Caco-2 (cell line): ENCODE measurements at regions of chr5 and their contacts with region 1.

Region 1: DNA sequence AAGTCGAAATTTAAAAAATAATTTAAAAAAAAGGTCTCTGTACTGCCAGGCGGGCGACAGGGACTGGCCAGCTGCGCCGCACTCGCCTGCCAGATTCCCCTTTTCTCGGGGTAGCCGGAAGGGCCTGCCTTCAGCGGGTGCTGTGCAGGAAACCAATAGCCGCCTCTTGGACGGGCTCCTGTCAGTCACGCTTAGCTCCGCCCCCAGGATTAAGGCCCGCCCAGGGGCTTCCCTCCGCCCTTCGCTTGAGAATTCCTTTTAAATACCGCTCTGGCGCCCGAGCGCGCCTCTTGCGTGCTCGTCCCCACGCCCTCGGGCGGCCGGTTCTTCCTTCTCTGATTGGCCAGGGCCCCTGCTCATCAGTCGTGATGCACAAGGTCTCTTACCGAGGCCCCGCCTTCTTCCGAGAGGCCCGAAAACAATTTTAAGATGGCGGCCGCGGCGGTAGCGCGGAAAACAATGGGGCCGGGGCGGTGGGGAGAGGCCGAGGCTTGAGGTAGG is at the start of gene MAML1:
- DNase-seq: peak; percentile 100
- H3K4me3 ChIP-seq: peak within 1 kb of the TSS; percentile 78
- H3K4me3 Mint-ChIP-seq: peak within 1 kb of the TSS; percentile 70
- H3K27ac Mint-ChIP-seq: peak within 1 kb of the TSS; percentile 85
- H3K4me1 ChIP-seq: peaks cover 13% of the 10 kb centered on the region
- H3K4me1 Mint-ChIP-seq: peaks cover 8% of the 10 kb centered on the region
- H3K27me3 ChIP-seq: no peaks in the 10 kb centered on the region
- H3K27me3 Mint-ChIP-seq: no peaks in the 10 kb centered on the region
- CTCF ChIP-seq: no peak
- total RNA-seq, gene MAML1: 39.3 and 41.3 TPM in 2 replicates

Region 2: DNA sequence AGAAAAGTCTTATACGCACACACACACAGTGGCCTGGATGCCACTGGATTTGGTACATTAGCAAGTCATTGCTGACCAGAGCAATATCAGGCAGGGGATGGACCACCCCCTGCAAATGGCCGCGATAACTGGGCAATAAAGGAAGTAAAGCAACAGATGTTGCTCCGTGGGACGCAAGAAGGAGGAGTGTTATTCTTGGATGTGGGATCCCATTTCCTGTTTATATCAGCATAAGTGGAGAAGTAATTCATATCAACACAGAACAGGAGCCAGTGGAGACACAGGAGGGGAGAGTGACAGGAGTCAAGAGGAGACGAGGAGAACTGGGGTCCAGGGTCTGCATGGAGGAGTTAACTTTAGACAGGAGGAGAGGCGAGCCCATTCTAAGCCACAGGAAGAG is 163.7 kb before region 1 on chr5:
- CTCF ChIA-PET with region 1: no interaction called
- POLR2A ChIA-PET with region 1: no interaction called
- intact Hi-C with region 1: no loop called
- DNase-seq: no peak
- H3K4me3 ChIP-seq: no peak overlapping the region
- H3K4me3 Mint-ChIP-seq: no peak overlapping the region
- H3K27ac Mint-ChIP-seq: no peak overlapping the region
- H3K4me1 ChIP-seq: no peaks in the 10 kb centered on the region
- H3K4me1 Mint-ChIP-seq: no peaks in the 10 kb centered on the region
- H3K27me3 ChIP-seq: no peaks in the 10 kb centered on the region
- H3K27me3 Mint-ChIP-seq: no peaks in the 10 kb centered on the region
- CTCF ChIP-seq: no peak

Region 3: GRCh38 chr5:179678223-179679013 is 54.0 kb before region 1 on chr5:
- CTCF ChIA-PET with region 1: interaction called, 3 read pairs
- POLR2A ChIA-PET with region 1: interaction called, 7 read pairs
- intact Hi-C with region 1: loop called (anchors 2 kb)
- DNase-seq: peak; percentile 95 to 96
- H3K4me3 ChIP-seq: peak overlapping the region; percentile 72
- H3K4me3 Mint-ChIP-seq: peak overlapping the region; percentile 98
- H3K27ac Mint-ChIP-seq: peak overlapping the region; percentile 97
- H3K4me1 ChIP-seq: peaks cover 11% of the 10 kb centered on the region
- H3K4me1 Mint-ChIP-seq: peaks cover 21% of the 10 kb centered on the region
- H3K27me3 ChIP-seq: no peaks in the 10 kb centered on the region
- H3K27me3 Mint-ChIP-seq: no peaks in the 10 kb centered on the region
- CTCF ChIP-seq: no peak

Region 4: GRCh38 chr5:179697993-179698934 is 34.2 kb before region 1 on chr5:
- CTCF ChIA-PET with region 1: no interaction called
- POLR2A ChIA-PET with region 1: no interaction called
- intact Hi-C with region 1: loop called (anchors 1 kb)
- DNase-seq: peak; percentile 99 to 100
- H3K4me3 ChIP-seq: peak overlapping the region; percentile 95
- H3K4me3 Mint-ChIP-seq: peak overlapping the region; percentile 99
- H3K27ac Mint-ChIP-seq: peak overlapping the region; percentile 93
- H3K4me1 ChIP-seq: peaks cover 8% of the 10 kb centered on the region
- H3K4me1 Mint-ChIP-seq: peaks cover 8% of the 10 kb centered on the region
- H3K27me3 ChIP-seq: no peaks in the 10 kb centered on the region
- H3K27me3 Mint-ChIP-seq: no peaks in the 10 kb centered on the region
- CTCF ChIP-seq: no peak

Region 5: GRCh38 chr5:179755022-179755421 is 22.6 kb after region 1 on chr5:
- CTCF ChIA-PET with region 1: interaction called, 4 read pairs
- POLR2A ChIA-PET with region 1: interaction called, 9 read pairs
- intact Hi-C with region 1: loop called (anchors 1 kb)
- DNase-seq: peak in 1 of 2 experiments; percentile 32
- H3K4me3 ChIP-seq: no peak overlapping the region
- H3K4me3 Mint-ChIP-seq: peak overlapping the region; percentile 9
- H3K27ac Mint-ChIP-seq: peak overlapping the region; percentile 8
- H3K4me1 ChIP-seq: peaks cover 18% of the 10 kb centered on the region
- H3K4me1 Mint-ChIP-seq: peaks cover 36% of the 10 kb centered on the region
- H3K27me3 ChIP-seq: no peaks in the 10 kb centered on the region
- H3K27me3 Mint-ChIP-seq: no peaks in the 10 kb centered on the region
- CTCF ChIP-seq: no peak

Region 6: GRCh38 chr5:179763215-179763945 is 30.9 kb after region 1 on chr5:
- CTCF ChIA-PET with region 1: interaction called, 4 read pairs
- POLR2A ChIA-PET with region 1: interaction called, 6 read pairs
- intact Hi-C with region 1: loop called (anchors 2 kb)
- DNase-seq: peak; percentile 82
- H3K4me3 ChIP-seq: no peak overlapping the region
- H3K4me3 Mint-ChIP-seq: no peak overlapping the region
- H3K27ac Mint-ChIP-seq: peak overlapping the region; percentile 81
- H3K4me1 ChIP-seq: peaks cover 12% of the 10 kb centered on the region
- H3K4me1 Mint-ChIP-seq: peaks cover 31% of the 10 kb centered on the region
- H3K27me3 ChIP-seq: no peaks in the 10 kb centered on the region
- H3K27me3 Mint-ChIP-seq: no peaks in the 10 kb centered on the region
- CTCF ChIP-seq: peak; percentile 84 to 96

Region 7: GRCh38 chr5:179795863-179796833 is 63.7 kb after region 1 on chr5:
- CTCF ChIA-PET with region 1: interaction called, 9 read pairs
- POLR2A ChIA-PET with region 1: interaction called, 5 read pairs
- intact Hi-C with region 1: loop called (anchors 1 kb)
- DNase-seq: peak; percentile 91 to 95
- H3K4me3 ChIP-seq: peak overlapping the region; percentile 77
- H3K4me3 Mint-ChIP-seq: peak overlapping the region; percentile 74
- H3K27ac Mint-ChIP-seq: peak overlapping the region; percentile 62
- H3K4me1 ChIP-seq: peaks cover 14% of the 10 kb centered on the region; the same call in 1 of the 2 replicates
- H3K4me1 Mint-ChIP-seq: peaks cover 7% of the 10 kb centered on the region
- H3K27me3 ChIP-seq: no peaks in the 10 kb centered on the region
- H3K27me3 Mint-ChIP-seq: no peaks in the 10 kb centered on the region
- CTCF ChIP-seq: peak; percentile 49 to 71

Region 8: DNA sequence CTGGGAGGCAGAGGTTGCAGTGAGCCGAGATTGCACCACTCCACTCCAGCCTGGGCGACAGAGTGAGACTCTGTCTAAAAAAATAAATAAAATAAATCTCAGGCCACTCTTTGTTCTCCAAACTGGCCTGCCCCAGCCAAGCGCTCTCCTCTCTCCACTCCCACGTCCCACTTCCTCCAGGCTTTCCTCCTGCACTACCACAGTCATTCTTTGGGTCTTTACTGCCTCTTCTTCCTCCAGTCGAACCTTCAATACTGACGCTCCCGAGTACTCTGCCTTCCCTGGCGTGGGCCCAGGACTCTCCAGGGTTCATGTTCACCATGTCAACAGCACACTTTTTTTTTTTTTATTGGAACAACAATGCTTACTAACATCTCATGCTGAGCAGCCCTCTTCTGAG is 315.2 kb after region 1 on chr5:
- CTCF ChIA-PET with region 1: no interaction called
- POLR2A ChIA-PET with region 1: no interaction called
- intact Hi-C with region 1: no loop called
- DNase-seq: no peak
- H3K4me3 ChIP-seq: no peak overlapping the region
- H3K4me3 Mint-ChIP-seq: no peak overlapping the region
- H3K27ac Mint-ChIP-seq: no peak overlapping the region
- H3K4me1 ChIP-seq: no peaks in the 10 kb centered on the region
- H3K4me1 Mint-ChIP-seq: peaks cover 9% of the 10 kb centered on the region
- H3K27me3 ChIP-seq: no peaks in the 10 kb centered on the region
- H3K27me3 Mint-ChIP-seq: no peaks in the 10 kb centered on the region
- CTCF ChIP-seq: no peak